ENCODE measurements at regions of chr11 and their contacts with region 1.

Region 1: GRCh38 chr11:119011483-119012053 is 6.6 kb downstream of the RPS25 start:
- DNase-seq: no peak
- ATAC-seq: peak; percentile 21
- H3K4me3 ChIP-seq: no peak overlapping the region
- H3K27ac ChIP-seq: no peak overlapping the region
- H3K4me1 ChIP-seq: peaks cover 6% of the 10 kb centered on the region
- H3K27me3 ChIP-seq: no peaks in the 10 kb centered on the region
- CTCF ChIP-seq: no peak

Region 2: GRCh38 chr11:118997627-118998387 is 13.8 kb before region 1 on chr11 and contains the start of gene CENATAC:
- CTCF ChIA-PET with region 1: interaction called, 7 read pairs
- POLR2A ChIA-PET with region 1: interaction called, 13 read pairs
- intact Hi-C with region 1: no loop called
- DNase-seq: peak; percentile 95
- ATAC-seq: peak; percentile 92
- H3K4me3 ChIP-seq: peak within 1 kb of the TSS; percentile 77
- H3K27ac ChIP-seq: peak within 1 kb of the TSS; percentile 41
- H3K4me1 ChIP-seq: peaks cover 38% of the 10 kb centered on the region
- H3K27me3 ChIP-seq: no peaks in the 10 kb centered on the region
- CTCF ChIP-seq: no peak
- total RNA-seq, gene CENATAC: 83.5 and 88.0 TPM in 2 replicates

Region 3: GRCh38 chr11:119084663-119085436 is 73.3 kb after region 1 on chr11 and contains the start of gene HMBS:
- CTCF ChIA-PET with region 1: no interaction called
- POLR2A ChIA-PET with region 1: interaction called, 13 read pairs
- intact Hi-C with region 1: no loop called
- DNase-seq: peak; percentile 98
- ATAC-seq: peak; percentile 91
- H3K4me3 ChIP-seq: peak within 1 kb of the TSS; percentile 80
- H3K27ac ChIP-seq: peak within 1 kb of the TSS; percentile 80
- H3K4me1 ChIP-seq: peaks cover 23% of the 10 kb centered on the region
- H3K27me3 ChIP-seq: no peaks in the 10 kb centered on the region
- CTCF ChIP-seq: no peak
- total RNA-seq, gene HMBS: 9.3 and 22.5 TPM in 2 replicates